Esophagus squamous epithelium (tissue), 5 donors: ENCODE measurements at regions of chr12 and their contacts with region 1.

Region 1: GRCh38 chr12:52390739-52391617 is 5.5 kb upstream of the KRT84 start:
- DNase-seq: no peak
- H3K4me3 ChIP-seq: no peak overlapping the region
- H3K27ac ChIP-seq: peak overlapping the region in 3 of 4 donors; percentile 25 to 54 (median 26)
- H3K4me1 ChIP-seq: peaks cover 6 to 54% (median 35%) of the 10 kb centered on the region in 3 donors
- H3K27me3 ChIP-seq: peaks cover 0 to 5% (median 0%) of the 10 kb centered on the region in 4 donors
- CTCF ChIP-seq: peak in 5 of 6 experiments; percentile 34 to 82 (median 60)
- POLR2A ChIP-seq: no peak

Region 2: DNA sequence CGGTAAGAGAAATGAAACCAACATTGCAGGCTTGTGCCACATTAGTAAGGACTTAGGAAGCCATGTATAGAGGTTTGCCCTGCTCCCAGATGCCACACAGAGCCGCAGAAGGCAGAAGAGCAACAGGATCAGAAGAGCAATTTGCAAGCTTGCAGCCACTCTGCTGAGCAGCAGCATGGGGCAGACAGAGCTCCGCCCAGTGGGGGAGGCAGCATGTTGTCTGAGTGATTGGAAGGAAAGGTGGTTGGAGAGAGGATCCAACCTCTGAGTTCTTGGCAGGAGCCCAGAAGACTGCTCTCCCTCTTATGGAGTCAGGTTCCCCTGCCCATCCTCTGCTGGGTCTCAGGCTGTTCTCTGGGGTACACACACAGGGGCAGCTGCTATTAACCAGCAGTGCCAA is 104.4 kb after region 1 on chr12:
- intact Hi-C with region 1: loop called (anchors 10 kb)
- DNase-seq: no peak
- H3K4me3 ChIP-seq: no peak overlapping the region
- H3K27ac ChIP-seq: peak overlapping the region; percentile 35 to 81 (median 46)
- H3K4me1 ChIP-seq: peaks cover 30 to 52% (median 33%) of the 10 kb centered on the region in 3 donors
- H3K27me3 ChIP-seq: no peaks in the 10 kb centered on the region
- CTCF ChIP-seq: no peak
- POLR2A ChIP-seq: no peak

Region 3: GRCh38 chr12:52615208-52615868 is 224.4 kb after region 1 on chr12:
- intact Hi-C with region 1: no loop called
- DNase-seq: no peak
- H3K4me3 ChIP-seq: no peak overlapping the region
- H3K27ac ChIP-seq: no peak overlapping the region
- H3K4me1 ChIP-seq: peaks cover 0 to 8% (median 0%) of the 10 kb centered on the region in 3 donors
- H3K27me3 ChIP-seq: peaks cover 0 to 44% (median 0%) of the 10 kb centered on the region in 4 donors
- CTCF ChIP-seq: no peak
- POLR2A ChIP-seq: no peak